ENCODE measurements at regions of chr2 and their contacts with region 1.

Region 1: DNA sequence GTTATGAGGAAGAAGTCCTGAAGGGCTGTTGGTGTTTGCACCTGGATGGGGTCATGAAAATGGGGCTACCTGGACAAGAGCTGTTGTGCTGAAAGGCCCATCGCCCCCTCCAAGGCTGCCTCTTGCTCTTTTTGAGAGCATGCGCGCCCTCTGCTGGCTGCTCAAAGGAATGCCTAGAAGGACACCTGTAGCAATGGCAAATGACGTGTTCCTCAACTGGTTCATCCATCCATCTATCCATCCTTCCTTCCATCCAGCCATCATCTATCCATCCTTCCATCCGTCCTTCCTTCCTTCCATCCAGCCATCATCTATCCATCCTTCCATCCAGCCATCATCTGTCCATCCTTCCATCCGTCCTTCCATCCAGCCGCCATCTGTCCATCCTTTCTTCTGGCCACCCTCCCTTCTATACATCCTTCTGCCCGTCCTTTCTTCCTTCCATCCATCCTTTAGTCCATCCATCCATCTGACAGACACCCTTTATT is 17.2 kb upstream of the RPL31 start:
- DNase-seq: peak; percentile 91
- H3K4me3 ChIP-seq: no peak overlapping the region
- H3K27ac ChIP-seq: no peak overlapping the region
- H3K4me1 ChIP-seq: peaks cover 0 to 4% (median 0%) of the 10 kb centered on the region in 6 donors
- H3K27me3 ChIP-seq: no peaks in the 10 kb centered on the region
- CTCF ChIP-seq: peak; percentile 84 to 94 (median 91)
- POLR2A ChIP-seq: no peak

Region 2: DNA sequence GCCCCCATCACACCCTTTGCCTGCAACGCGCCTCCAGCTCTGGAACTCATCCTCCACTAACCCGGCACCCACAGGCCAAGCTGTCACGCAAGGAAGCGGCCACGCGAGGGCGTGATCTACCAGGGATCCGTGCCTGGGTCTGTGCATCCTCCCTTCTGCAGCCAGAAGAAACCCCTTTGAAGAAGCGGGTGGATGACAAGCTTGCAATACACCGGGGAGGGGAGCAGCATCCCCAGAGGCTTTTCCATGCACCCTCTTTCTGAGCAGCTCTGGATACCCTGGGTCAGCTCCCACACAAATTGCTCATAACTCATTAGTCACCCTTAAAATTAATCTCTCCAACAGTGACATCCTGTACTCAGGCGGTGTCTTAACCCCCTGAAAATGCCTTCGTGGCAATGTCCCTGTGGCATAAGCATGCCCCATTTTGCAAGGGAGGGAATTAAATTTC is 374.5 kb before region 1 on chr2:
- intact Hi-C with region 1: loop called (anchors 2 kb)
- DNase-seq: peak; percentile 89
- H3K4me3 ChIP-seq: no peak overlapping the region
- H3K27ac ChIP-seq: no peak overlapping the region
- H3K4me1 ChIP-seq: no peaks in the 10 kb centered on the region
- H3K27me3 ChIP-seq: peaks cover 0 to 17% (median 0%) of the 10 kb centered on the region in 7 donors
- CTCF ChIP-seq: peak; percentile 29 to 75 (median 50)
- POLR2A ChIP-seq: no peak

Region 3: GRCh38 chr2:100730346-100730745 is 254.6 kb before region 1 on chr2:
- intact Hi-C with region 1: loop called (anchors 2 kb)
- DNase-seq: no peak
- H3K4me3 ChIP-seq: no peak overlapping the region
- H3K27ac ChIP-seq: no peak overlapping the region
- H3K4me1 ChIP-seq: peaks cover 0 to 11% (median 0%) of the 10 kb centered on the region in 6 donors
- H3K27me3 ChIP-seq: peaks cover 0 to 16% (median 4%) of the 10 kb centered on the region in 7 donors
- CTCF ChIP-seq: peak in 9 of 11 experiments; percentile 28 to 58 (median 44)
- POLR2A ChIP-seq: no peak

Measured in spleen (tissue), 13 donors.